Heart left ventricle (tissue), 16 donors: ENCODE measurements at regions of chr13 and their contacts with region 1.

Region 1: GRCh38 chr13:42707586-42707985 is 73.8 kb upstream of the FAM216B start:
- DNase-seq: no peak
- ATAC-seq: peak in 1 of 4 donors; percentile 40
- H3K4me3 ChIP-seq: no peak overlapping the region
- H3K27ac ChIP-seq: peak overlapping the region in 7 of 12 donors; percentile 1 to 60 (median 42)
- H3K4me1 ChIP-seq: peaks cover 0 to 17% (median 3%) of the 10 kb centered on the region in 12 donors
- H3K27me3 ChIP-seq: no peaks in the 10 kb centered on the region
- CTCF ChIP-seq: no peak
- POLR2A ChIP-seq: no peak

Region 2: DNA sequence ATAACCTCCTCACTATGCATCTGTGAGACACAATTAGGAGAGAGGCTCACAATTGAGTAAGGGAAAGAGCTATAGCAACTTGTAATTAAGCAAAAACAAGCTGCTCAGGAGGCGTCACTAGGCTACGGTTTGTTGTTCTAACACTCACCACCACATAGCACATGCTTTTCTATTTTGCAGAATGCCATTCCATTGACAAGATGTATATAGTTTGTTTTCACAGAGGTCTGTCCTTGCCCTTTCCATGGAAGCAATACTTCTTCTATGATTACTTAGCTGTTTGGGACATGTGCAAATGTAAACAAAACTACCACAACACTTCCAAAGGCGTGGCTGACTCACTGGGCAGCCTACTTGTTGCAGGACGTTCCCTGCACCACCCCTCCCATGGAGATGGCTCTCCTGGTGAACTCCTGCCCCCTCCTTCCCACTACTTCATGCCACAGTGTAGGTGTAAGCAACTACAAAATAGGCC is 39.9 kb after region 1 on chr13:
- intact Hi-C with region 1: loop called in 1 of 10 experiments (anchors 5 kb)
- DNase-seq: no peak
- ATAC-seq: peak; percentile 32 to 94 (median 82)
- H3K4me3 ChIP-seq: no peak overlapping the region
- H3K27ac ChIP-seq: peak overlapping the region in 6 of 12 donors; percentile 7 to 50 (median 30)
- H3K4me1 ChIP-seq: peaks cover 0 to 11% (median 0%) of the 10 kb centered on the region in 12 donors
- H3K27me3 ChIP-seq: no peaks in the 10 kb centered on the region
- CTCF ChIP-seq: no peak
- POLR2A ChIP-seq: no peak

Region 3: GRCh38 chr13:44004878-44005277 is 1297.3 kb after region 1 on chr13:
- intact Hi-C with region 1: no loop called
- DNase-seq: no peak
- ATAC-seq: no peak
- H3K4me3 ChIP-seq: no peak overlapping the region
- H3K27ac ChIP-seq: no peak overlapping the region
- H3K4me1 ChIP-seq: peaks cover 0 to 11% (median 0%) of the 10 kb centered on the region in 12 donors
- H3K27me3 ChIP-seq: no peaks in the 10 kb centered on the region
- CTCF ChIP-seq: no peak
- POLR2A ChIP-seq: no peak